ENCODE measurements at regions of chr12 and their contacts with region 1.

Region 1: DNA sequence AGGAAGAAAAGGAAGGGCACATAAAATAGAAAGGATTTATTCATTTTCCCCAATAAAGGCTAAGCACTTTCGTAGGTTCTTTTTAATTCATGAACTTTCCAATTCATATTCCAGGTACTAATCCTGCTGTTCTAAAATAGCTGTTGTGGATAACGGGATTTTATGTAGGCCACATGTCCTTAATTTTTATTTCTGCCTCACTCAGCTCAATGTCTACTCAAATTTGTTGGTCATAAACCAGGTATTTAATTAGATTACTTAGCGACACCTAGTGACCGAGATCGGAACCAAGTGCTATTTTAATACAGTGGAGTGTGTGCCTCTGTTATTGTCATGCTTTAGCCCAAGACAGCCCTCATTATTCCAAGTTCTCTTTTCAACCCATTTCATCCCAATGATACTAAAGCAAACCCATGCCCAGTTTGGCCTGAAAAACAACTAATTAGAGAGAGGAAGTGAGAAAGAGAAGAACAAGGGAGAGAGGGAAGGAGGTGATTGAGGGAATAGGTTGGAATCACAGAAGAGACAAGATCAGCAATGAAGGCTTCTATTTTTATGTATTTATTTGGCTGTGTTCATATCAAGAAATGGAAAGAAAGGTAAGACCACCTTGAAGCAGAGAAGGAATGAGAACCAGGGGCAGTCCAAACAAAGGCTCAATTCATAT is 45.9 kb upstream of the IFNG-AS1 start:
- DNase-seq: peak; percentile 86
- ATAC-seq: peak; percentile 77
- H3K4me3 Mint-ChIP-seq: no peak overlapping the region
- H3K27ac Mint-ChIP-seq: no peak overlapping the region
- H3K4me1 Mint-ChIP-seq: no peaks in the 10 kb centered on the region
- H3K27me3 Mint-ChIP-seq: no peaks in the 10 kb centered on the region
- CTCF ChIP-seq: peak; percentile 84

Region 2: DNA sequence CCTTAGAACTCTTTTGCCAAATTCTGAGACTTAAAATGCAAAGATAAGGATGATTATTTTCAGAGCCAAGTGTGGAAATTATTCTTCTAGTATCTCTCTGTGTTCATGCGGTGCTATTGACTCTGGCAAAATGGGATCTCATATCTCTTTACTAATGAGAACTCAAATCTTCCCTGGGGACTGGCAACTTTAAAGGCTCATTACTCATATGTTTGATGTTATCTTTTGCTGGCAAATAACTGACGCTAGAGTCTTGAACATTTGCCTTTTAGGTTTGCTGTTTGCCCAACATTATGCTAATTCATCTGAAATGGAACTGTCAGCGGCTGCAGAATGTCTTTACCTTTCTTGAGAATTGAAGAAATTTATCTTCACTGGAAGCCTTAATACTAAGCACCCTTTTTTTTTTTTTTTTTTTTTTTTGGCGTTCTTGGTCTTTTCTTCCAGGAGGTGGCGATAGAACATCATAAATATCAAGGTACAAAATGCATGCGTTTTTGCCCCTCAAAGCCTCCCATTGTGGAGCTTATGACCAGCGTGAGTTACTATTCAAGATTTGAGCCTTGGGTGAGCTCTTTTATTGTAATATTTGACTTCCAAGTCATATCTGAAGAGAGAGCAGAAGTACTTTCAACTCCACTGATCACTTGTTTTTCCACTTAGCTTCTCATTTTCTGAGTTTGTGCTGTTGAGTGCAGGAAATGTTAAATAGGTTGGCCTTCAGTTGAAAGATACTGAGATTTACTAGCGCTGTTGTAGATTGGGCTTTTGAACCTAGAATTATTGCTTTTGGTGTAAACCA is 587.6 kb before region 1 on chr12:
- CTCF ChIA-PET with region 1: interaction called, 90 read pairs
- POLR2A ChIA-PET with region 1: no interaction called
- intact Hi-C with region 1: loop called (anchors 2 kb)
- DNase-seq: peak; percentile 20
- ATAC-seq: no peak
- H3K4me3 Mint-ChIP-seq: no peak overlapping the region
- H3K27ac Mint-ChIP-seq: no peak overlapping the region
- H3K4me1 Mint-ChIP-seq: peaks cover 16% of the 10 kb centered on the region
- H3K27me3 Mint-ChIP-seq: no peaks in the 10 kb centered on the region
- CTCF ChIP-seq: peak; percentile 72

Region 3: GRCh38 chr12:67698672-67699581 is 244.4 kb before region 1 on chr12:
- CTCF ChIA-PET with region 1: no interaction called
- POLR2A ChIA-PET with region 1: no interaction called
- intact Hi-C with region 1: loop called (anchors 10 kb)
- DNase-seq: peak; percentile 79
- ATAC-seq: peak; percentile 89
- H3K4me3 Mint-ChIP-seq: peak overlapping the region; percentile 61
- H3K27ac Mint-ChIP-seq: peak overlapping the region; percentile 79
- H3K4me1 Mint-ChIP-seq: peaks cover 70% of the 10 kb centered on the region
- H3K27me3 Mint-ChIP-seq: no peaks in the 10 kb centered on the region
- CTCF ChIP-seq: no peak

Region 4: GRCh38 chr12:67758119-67758518 is 185.2 kb before region 1 on chr12:
- CTCF ChIA-PET with region 1: no interaction called
- POLR2A ChIA-PET with region 1: no interaction called
- intact Hi-C with region 1: no loop called
- DNase-seq: no peak
- ATAC-seq: no peak
- H3K4me3 Mint-ChIP-seq: no peak overlapping the region
- H3K27ac Mint-ChIP-seq: no peak overlapping the region
- H3K4me1 Mint-ChIP-seq: peaks cover 35% of the 10 kb centered on the region
- H3K27me3 Mint-ChIP-seq: no peaks in the 10 kb centered on the region
- CTCF ChIP-seq: no peak

Region 5: DNA sequence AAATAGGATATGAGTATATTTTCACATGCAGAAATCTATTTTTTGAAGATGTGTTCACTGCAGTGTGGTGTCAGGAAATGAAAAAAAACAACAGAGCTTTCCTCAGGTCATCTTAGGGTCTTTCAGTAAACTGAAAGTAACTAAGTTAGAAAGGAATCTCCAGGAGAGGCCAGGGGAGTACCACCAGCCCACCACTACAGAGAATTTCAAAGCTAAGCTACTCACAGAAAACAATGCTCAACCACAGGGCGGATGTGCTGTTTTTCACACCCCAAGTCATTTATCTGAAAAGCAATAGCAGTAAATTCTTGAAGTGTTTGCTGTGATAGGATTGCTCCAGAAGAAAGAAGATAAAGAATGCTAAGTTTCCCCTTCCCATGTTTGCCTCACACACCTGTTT is 137.2 kb after region 1 on chr12:
- CTCF ChIA-PET with region 1: no interaction called
- POLR2A ChIA-PET with region 1: no interaction called
- intact Hi-C with region 1: no loop called
- DNase-seq: peak; percentile 85
- ATAC-seq: peak; percentile 94
- H3K4me3 Mint-ChIP-seq: no peak overlapping the region
- H3K27ac Mint-ChIP-seq: peak overlapping the region; percentile 51
- H3K4me1 Mint-ChIP-seq: peaks cover 36% of the 10 kb centered on the region
- H3K27me3 Mint-ChIP-seq: no peaks in the 10 kb centered on the region
- CTCF ChIP-seq: no peak

Measured in activated CD8-positive, alpha-beta T cell treated with anti-CD3 and anti-CD28 coated beads for 36 hours (primary cell).